Activated T-helper 1 cell treated with anti-CD3 and anti-CD28 coated beads, Interleukin-12 subunit alpha, Interleukin-12 subunit beta, Interleukin-2, Interleukin-4 antibody, amounts not matched to agents 30 ng/mL and 10 ng/mL and 1 ng/mL, durations not matched to agents 14 hours and 24 hours and 36 hours (primary cell): ENCODE measurements at regions of chr10 and their contacts with region 1.

Region 1: GRCh38 chr10:124916585-124917427 is 25.1 kb upstream of the ZRANB1 start:
- DNase-seq: peak; percentile 96
- H3K4me3 Mint-ChIP-seq: peak overlapping the region; percentile 93
- H3K27ac Mint-ChIP-seq: peak overlapping the region; percentile 96
- H3K4me1 Mint-ChIP-seq: peaks cover 40% of the 10 kb centered on the region
- H3K27me3 Mint-ChIP-seq: peaks cover 9% of the 10 kb centered on the region

Region 2: GRCh38 chr10:124418726-124419501 is 497.9 kb before region 1 on chr10 and contains the start of gene OAT:
- intact Hi-C with region 1: loop called (anchors 2 kb)
- DNase-seq: peak; percentile 95
- H3K4me3 Mint-ChIP-seq: peak within 1 kb of the TSS; percentile 81
- H3K27ac Mint-ChIP-seq: peak within 1 kb of the TSS; percentile 29
- H3K4me1 Mint-ChIP-seq: peaks cover 12% of the 10 kb centered on the region
- H3K27me3 Mint-ChIP-seq: peaks cover 22% of the 10 kb centered on the region
- total RNA-seq, gene OAT: 35.6 and 37.9 TPM in 2 replicates

Region 3: DNA sequence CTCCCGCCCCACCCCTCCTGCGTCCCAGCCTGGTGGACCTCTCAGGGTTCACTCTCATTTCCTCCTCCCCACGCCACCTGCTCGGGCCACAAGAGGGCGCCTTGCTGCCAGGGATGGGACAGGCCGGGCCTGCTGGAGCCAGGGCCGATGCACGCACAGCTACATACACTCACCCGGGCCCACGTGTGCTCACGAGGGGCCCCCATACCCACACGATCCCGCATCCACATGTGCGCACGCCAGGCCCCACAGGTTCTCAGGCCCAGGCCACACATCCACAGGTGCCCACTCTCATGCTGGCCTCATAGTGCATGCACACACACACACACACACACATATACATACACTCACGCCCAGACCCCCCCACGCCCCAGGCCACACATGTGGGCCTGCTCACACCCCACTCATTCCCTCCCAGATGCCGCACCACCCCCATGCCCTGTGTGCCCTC is 386.6 kb before region 1 on chr10:
- intact Hi-C with region 1: loop called (anchors 5 kb)
- DNase-seq: peak; percentile 78
- H3K4me3 Mint-ChIP-seq: no peak overlapping the region
- H3K27ac Mint-ChIP-seq: no peak overlapping the region
- H3K4me1 Mint-ChIP-seq: peaks cover 5% of the 10 kb centered on the region
- H3K27me3 Mint-ChIP-seq: peaks cover 10% of the 10 kb centered on the region

Region 4: DNA sequence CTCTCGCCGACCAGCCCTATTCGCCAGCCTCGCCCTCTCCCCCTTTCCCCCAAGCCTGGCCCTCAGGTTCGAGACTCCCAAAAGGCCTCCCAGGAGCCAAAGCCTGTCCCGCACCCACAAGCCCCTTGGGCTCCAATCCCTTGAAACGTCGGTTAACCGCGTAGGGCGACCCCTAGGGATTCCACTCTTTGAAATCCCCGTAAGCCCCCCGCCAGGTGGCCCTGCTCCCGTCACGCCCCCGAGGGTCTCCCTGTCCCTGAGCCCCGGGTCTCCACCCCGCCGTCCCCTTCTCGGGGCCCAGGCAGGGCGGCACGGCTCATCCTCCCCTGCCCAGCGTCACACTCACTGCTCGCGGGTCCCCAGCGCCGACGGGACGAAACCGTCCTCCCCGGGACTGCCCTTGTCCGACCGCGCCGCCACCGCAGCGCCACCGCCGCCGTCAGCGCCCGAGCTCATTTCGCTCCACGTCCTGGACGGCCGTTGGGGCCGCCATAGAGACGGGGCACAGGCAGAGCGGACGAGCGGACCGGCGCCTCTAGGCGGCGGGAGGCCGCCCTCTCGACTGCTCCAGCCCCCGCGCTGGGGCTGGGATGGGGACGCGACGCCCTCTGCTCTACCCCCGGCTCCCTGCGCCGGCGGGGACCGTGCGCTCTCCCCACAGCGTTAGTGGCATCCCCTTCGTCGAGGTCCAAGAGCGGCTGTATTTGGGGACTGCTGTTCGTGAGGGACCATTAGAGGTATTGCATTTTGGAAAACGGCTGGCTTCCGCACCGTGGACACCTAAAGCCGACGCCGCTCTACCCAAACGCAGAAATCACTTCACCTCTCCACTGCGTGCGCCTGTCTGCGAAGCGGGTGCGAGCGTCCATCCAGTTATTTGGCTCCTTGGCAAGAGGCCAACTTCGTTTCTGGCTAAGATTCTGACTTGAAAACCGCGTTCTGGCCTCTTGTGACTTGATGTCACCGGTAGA is 125.1 kb before region 1 on chr10 and contains the start of gene EEF1AKMT2:
- intact Hi-C with region 1: loop called (anchors 1 kb)
- DNase-seq: peak; percentile 78
- H3K4me3 Mint-ChIP-seq: peak within 1 kb of the TSS; percentile 94
- H3K27ac Mint-ChIP-seq: peak within 1 kb of the TSS; percentile 92
- H3K4me1 Mint-ChIP-seq: peaks cover 24% of the 10 kb centered on the region
- H3K27me3 Mint-ChIP-seq: peaks cover 3% of the 10 kb centered on the region
- total RNA-seq, gene EEF1AKMT2: 20.5 and 21.3 TPM in 2 replicates

Region 5: DNA sequence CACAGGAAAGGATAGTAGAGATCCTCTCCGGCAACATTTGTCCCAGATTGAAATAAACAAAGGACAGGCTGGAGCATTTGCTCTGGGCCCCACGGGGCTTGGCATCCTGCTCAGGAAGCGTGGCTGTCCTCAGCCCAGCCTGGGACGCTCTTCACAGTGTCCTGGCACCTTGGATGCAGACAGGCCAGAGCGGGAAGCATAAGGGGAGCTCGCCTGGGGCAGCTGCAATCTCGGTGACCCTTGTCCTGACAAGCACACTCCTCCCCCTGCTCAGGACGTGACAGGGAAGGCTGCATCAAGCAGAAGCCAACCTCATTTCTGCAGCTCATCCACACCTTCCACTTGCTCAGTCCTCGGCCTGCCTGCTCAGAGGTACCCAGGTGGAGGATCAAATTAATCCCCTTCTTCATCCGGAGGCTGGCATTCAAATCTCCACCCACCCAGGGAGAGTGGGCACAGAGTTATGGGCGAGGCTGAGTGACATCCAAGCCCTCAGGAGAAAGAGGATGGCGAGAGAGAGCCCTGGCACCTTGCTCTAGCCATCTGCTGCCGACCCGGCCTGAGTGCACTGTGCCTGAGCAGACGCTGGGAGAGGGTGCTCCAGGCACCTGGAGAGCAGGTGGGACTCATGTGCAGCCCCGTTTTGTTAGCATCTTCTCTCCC is 67.6 kb before region 1 on chr10:
- intact Hi-C with region 1: no loop called
- DNase-seq: no peak
- H3K4me3 Mint-ChIP-seq: no peak overlapping the region
- H3K27ac Mint-ChIP-seq: no peak overlapping the region
- H3K4me1 Mint-ChIP-seq: no peaks in the 10 kb centered on the region
- H3K27me3 Mint-ChIP-seq: no peaks in the 10 kb centered on the region

Region 6: DNA sequence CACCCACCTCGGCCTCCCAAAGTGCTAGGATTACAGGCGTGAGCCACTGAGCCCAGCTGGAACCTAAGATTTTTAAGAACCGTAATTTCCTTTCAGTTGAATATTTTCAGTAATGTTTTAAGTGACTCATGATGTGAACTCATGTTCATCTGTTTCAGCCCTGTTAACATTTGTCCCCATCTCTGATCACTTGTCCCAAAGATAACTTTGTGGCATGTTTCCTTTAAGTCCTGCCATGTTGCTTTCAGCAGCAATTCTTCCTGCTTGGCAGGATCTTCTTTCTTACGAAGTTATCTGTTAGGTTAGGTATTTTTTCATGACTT is 44.4 kb after region 1 on chr10:
- intact Hi-C with region 1: loop called (anchors 5 kb)
- DNase-seq: no peak
- H3K4me3 Mint-ChIP-seq: no peak overlapping the region
- H3K27ac Mint-ChIP-seq: no peak overlapping the region
- H3K4me1 Mint-ChIP-seq: peaks cover 13% of the 10 kb centered on the region
- H3K27me3 Mint-ChIP-seq: no peaks in the 10 kb centered on the region

Region 7: GRCh38 chr10:125822878-125823662 is 906.3 kb after region 1 on chr10 and contains the starts of genes BCCIP and UROS:
- intact Hi-C with region 1: loop called (anchors 10 kb)
- DNase-seq: peak; percentile 86
- H3K4me3 Mint-ChIP-seq: peak within 1 kb of the TSS; percentile 87
- H3K27ac Mint-ChIP-seq: peak within 1 kb of the TSS; percentile 41
- H3K4me1 Mint-ChIP-seq: peaks cover 11% of the 10 kb centered on the region
- H3K27me3 Mint-ChIP-seq: no peaks in the 10 kb centered on the region
- total RNA-seq, gene BCCIP: 127 and 128 TPM in 2 replicates
- total RNA-seq, gene UROS: 49.0 and 57.8 TPM in 2 replicates